Cardiac septum (tissue), 1 donor: ENCODE measurements at regions of chr15 and their contacts with region 1.

Region 1: GRCh38 chr15:48877630-48878595 is at the start of gene EID1:
- DNase-seq: peak; percentile 97
- total RNA-seq, gene EID1: 201 TPM

Region 2: GRCh38 chr15:48963524-48964113 is 85.7 kb after region 1 on chr15 and contains the start of gene SHC4:
- intact Hi-C with region 1: no loop called
- DNase-seq: peak; percentile 77
- total RNA-seq, gene SHC4: 3.3 TPM

Region 3: GRCh38 chr15:48975472-48976419 is 97.8 kb after region 1 on chr15:
- intact Hi-C with region 1: loop called (anchors 2 kb)
- DNase-seq: peak; percentile 88

Region 4: DNA sequence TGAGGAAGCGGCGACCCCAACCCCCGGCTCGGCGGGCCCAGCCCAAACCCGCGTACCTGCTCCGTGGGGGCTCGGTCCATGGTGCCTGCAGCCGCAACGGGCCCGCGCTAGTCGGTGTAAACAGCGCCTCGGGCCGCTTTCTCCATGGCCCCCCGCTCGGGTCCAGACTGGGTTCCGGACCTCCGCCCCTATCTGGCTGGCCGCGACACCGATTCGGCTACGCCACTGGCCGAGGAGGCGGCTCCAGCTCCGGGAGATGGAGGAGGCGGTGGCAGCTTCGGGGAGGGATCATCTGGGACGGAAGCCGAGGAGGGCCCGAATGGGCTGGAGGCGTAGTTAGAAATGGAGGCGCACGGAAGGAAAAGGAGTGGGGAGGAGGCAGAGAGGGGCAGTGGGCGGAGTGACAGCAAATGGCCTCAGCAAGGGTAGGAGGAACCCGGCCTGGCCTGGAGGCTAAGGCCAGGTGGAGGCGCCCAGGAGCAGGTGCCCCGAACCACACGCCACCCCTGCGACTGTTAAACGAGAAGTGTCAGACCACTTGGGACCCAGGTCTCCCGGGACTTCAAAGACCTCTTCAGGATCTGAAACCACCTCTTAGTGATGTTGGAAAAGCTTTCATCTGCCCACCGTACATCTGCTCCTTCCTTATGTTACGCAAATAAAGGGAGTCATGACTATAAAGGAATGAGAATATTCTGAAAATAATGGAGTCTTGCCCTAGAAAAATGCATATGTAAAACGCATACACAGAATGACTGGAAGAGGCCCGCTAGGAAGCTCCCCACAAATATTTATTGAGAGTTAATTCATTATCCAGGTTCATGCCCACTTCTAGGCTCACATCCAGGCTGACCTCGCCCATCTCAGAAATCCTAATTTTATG is 168.5 kb after region 1 on chr15 and contains the start of gene SECISBP2L:
- intact Hi-C with region 1: loop called (anchors 5 kb)
- DNase-seq: peak; percentile 97
- total RNA-seq, gene SECISBP2L: 40.9 TPM

Region 5: GRCh38 chr15:49155110-49155833 is 277.4 kb after region 1 on chr15 and contains the start of gene COPS2:
- intact Hi-C with region 1: loop called (anchors 1 kb)
- DNase-seq: peak; percentile 97
- total RNA-seq, gene COPS2: 71.6 TPM